Calu3 (cell line): ENCODE measurements at regions of chr6 and their contacts with region 1.

Region 1: GRCh38 chr6:18155150-18155863 is at the start of gene KDM1B:
- DNase-seq: peak; percentile 95
- H3K4me3 Mint-ChIP-seq: peak within 1 kb of the TSS; percentile 93
- H3K27ac Mint-ChIP-seq: peak within 1 kb of the TSS; percentile 81
- H3K4me1 Mint-ChIP-seq: peaks cover 9% of the 10 kb centered on the region
- H3K27me3 Mint-ChIP-seq: no peaks in the 10 kb centered on the region
- CTCF ChIP-seq: no peak
- total RNA-seq, gene KDM1B: 11.3 and 13.5 TPM in 2 replicates

Region 2: GRCh38 chr6:17790489-17790888 is 364.8 kb before region 1 on chr6:
- CTCF ChIA-PET with region 1: interaction called, 10 read pairs
- intact Hi-C with region 1: no loop called
- DNase-seq: no peak
- H3K4me3 Mint-ChIP-seq: no peak overlapping the region
- H3K27ac Mint-ChIP-seq: no peak overlapping the region
- H3K4me1 Mint-ChIP-seq: no peaks in the 10 kb centered on the region
- H3K27me3 Mint-ChIP-seq: no peaks in the 10 kb centered on the region
- CTCF ChIP-seq: no peak

Region 3: GRCh38 chr6:18141805-18142590 is 13.3 kb before region 1 on chr6:
- CTCF ChIA-PET with region 1: no interaction called
- intact Hi-C with region 1: no loop called
- DNase-seq: no peak
- H3K4me3 Mint-ChIP-seq: no peak overlapping the region
- H3K27ac Mint-ChIP-seq: no peak overlapping the region
- H3K4me1 Mint-ChIP-seq: no peaks in the 10 kb centered on the region
- H3K27me3 Mint-ChIP-seq: no peaks in the 10 kb centered on the region
- CTCF ChIP-seq: no peak

Region 4: GRCh38 chr6:18264219-18264922 is 109.1 kb after region 1 on chr6 and contains the start of gene DEK:
- CTCF ChIA-PET with region 1: no interaction called
- intact Hi-C with region 1: loop called (anchors 10 kb)
- DNase-seq: peak; percentile 72
- H3K4me3 Mint-ChIP-seq: peak within 1 kb of the TSS; percentile 79
- H3K27ac Mint-ChIP-seq: peak within 1 kb of the TSS; percentile 68
- H3K4me1 Mint-ChIP-seq: peaks cover 38% of the 10 kb centered on the region
- H3K27me3 Mint-ChIP-seq: no peaks in the 10 kb centered on the region
- CTCF ChIP-seq: no peak
- total RNA-seq, gene DEK: 96.2 and 108 TPM in 2 replicates

Region 5: DNA sequence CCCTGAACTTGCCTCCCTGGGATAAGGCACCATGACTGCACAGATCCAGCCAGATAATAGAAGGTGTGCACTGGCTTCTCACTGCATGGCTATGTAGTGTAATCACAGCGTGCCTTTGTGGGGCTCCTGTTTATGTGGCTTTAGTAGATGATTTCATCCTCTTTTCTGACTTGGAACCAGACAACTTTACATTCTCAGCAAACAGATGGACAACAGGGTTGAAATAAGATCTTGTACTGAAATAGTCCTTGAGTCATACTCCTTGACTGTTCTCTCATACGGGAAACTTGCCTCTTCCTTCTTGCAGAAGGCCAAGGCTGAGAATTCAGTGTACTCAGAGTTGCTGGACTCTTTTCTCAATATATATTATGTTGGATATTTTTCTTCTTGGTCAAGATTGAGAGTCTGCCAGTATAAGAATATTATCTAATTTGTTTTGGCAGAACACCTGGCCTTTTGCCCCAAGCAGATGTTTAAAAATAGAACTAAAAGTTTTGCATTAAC is 206.8 kb after region 1 on chr6:
- CTCF ChIA-PET with region 1: no interaction called
- intact Hi-C with region 1: no loop called
- DNase-seq: no peak
- H3K4me3 Mint-ChIP-seq: no peak overlapping the region
- H3K27ac Mint-ChIP-seq: no peak overlapping the region
- H3K4me1 Mint-ChIP-seq: no peaks in the 10 kb centered on the region
- H3K27me3 Mint-ChIP-seq: no peaks in the 10 kb centered on the region
- CTCF ChIP-seq: no peak

Region 6: GRCh38 chr6:18444056-18444575 is 288.8 kb after region 1 on chr6:
- CTCF ChIA-PET with region 1: no interaction called
- intact Hi-C with region 1: no loop called
- DNase-seq: no peak
- H3K4me3 Mint-ChIP-seq: no peak overlapping the region
- H3K27ac Mint-ChIP-seq: no peak overlapping the region
- H3K4me1 Mint-ChIP-seq: no peaks in the 10 kb centered on the region
- H3K27me3 Mint-ChIP-seq: no peaks in the 10 kb centered on the region
- CTCF ChIP-seq: no peak